ENCODE measurements at regions of chr2 and their contacts with region 1.

Region 1: DNA sequence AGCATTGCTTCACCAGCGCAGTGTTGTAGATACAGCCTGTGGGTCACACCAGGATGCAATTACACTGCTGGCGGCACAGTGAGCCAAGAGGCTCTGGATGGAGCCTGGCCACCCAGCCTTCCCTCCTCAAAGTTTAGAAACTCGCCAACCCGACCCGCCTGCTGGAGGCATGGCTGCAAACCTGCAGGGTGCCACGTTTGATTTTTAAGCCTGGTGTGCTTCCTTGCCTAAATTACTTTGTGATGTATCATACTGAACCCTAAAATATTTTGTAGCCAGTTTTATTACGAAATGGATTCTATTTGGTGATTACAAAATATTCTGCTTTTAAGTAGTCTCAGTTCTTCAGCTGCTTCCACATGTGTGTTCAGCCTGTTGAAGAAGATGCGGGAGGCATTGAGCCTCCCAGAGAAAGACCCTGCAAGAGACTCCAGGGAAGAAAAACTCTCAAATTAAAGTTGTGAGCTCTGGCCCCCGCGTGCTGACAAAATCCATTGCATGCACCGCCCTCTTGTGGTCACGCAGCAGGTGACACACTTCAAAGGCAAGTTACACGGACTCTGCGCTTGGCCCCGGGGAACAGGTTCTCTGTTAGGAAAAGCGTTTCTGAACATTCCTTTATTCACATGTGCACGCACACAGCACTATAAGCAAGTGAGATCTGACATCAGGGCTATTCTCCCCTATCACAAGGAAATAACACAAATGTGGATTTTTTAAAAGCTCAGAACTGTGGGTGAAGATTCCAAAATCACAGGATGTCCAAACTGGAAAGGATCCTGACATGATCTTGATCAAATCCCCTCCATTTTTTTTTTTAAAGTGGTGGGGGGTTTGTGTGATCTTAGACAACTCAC is 63.0 kb upstream of the TWIST2 start:
- DNase-seq: peak; percentile 74
- H3K27ac ChIP-seq: peak overlapping the region; percentile 76
- CTCF ChIP-seq: peak; percentile 85

Region 2: GRCh38 chr2:238370823-238371372 is 414.0 kb before region 1 on chr2:
- CTCF ChIA-PET with region 1: interaction called, 19 read pairs
- POLR2A ChIA-PET with region 1: no interaction called
- DNase-seq: peak; percentile 75
- H3K27ac ChIP-seq: no peak overlapping the region
- CTCF ChIP-seq: peak; percentile 78

Region 3: DNA sequence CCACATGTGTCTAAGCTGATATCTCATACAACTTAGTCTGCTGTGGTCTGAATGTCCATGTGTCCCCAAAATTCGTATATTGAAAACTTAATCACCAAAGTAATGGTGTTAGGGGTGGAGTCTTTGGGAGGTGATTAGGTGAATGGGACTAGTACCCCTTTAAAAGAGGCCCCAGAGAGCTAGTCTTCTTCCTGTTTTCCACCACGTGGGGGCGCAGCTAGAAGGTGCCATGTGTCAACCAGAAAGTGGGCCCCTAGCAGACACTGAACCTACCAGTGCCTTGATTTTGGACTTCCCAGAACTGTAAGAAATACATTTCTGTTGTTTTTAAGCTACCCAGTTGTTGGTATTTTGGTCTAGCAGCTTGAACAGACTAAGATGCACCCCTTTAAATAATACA is 271.6 kb before region 1 on chr2:
- CTCF ChIA-PET with region 1: interaction called, 23 read pairs
- POLR2A ChIA-PET with region 1: no interaction called
- DNase-seq: peak; percentile 60
- H3K27ac ChIP-seq: no peak overlapping the region
- CTCF ChIP-seq: peak; percentile 65

Region 4: GRCh38 chr2:238761868-238762267 is 23.0 kb before region 1 on chr2:
- CTCF ChIA-PET with region 1: interaction called, 10 read pairs
- POLR2A ChIA-PET with region 1: no interaction called
- DNase-seq: peak; percentile 26
- H3K27ac ChIP-seq: no peak overlapping the region
- CTCF ChIP-seq: no peak

Measured in RWPE1 (cell line).